ENCODE measurements at regions of chr20 and their contacts with region 1.

Region 1: DNA sequence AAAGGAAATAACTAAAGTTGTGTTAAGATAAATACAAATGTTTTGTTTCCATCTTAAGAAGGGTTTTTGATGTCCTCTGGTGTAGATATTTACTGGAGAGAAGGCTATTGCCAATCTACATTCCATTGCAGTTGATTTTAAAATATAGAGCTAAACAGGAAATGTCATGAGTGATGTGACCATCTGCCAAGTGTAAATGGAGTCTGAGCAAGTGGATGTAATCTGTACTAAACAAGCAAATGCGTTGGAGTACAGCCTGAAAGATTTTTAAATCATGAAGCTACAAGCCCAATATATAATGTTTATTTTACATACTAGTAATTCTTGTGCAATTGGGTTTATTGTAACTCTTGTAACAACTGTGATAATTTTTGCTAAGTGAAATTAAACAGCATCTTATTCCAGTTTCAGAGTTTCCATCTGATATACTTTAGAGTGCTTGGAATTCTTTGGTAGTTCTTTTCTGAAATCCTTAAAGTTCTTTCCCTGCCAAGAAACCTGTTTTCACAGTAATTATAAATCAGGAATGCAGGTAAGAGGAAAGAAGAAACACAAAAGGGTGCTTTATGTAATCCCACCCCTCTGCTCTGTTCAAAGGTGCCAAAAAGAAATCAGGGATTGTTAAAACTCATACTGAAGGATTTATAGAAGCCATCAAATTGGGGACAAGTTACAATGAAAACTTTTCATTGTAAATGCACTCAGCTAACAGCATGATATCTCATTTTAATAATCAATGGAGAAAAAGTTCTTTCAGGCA is 47.2 kb upstream of the FLRT3 start:
- DNase-seq: no peak
- ATAC-seq: no peak
- H3K4me3 ChIP-seq: no peak overlapping the region
- H3K4me3 Mint-ChIP-seq: no peak overlapping the region
- H3K27ac ChIP-seq: no peak overlapping the region
- H3K27ac Mint-ChIP-seq: no peak overlapping the region
- H3K4me1 ChIP-seq: no peaks in the 10 kb centered on the region
- H3K4me1 Mint-ChIP-seq: no peaks in the 10 kb centered on the region
- H3K27me3 ChIP-seq: no peaks in the 10 kb centered on the region
- H3K27me3 Mint-ChIP-seq: no peaks in the 10 kb centered on the region

Region 2: GRCh38 chr20:14113416-14113815 is 271.2 kb before region 1 on chr20:
- CTCF ChIA-PET with region 1: no interaction called
- POLR2A ChIA-PET with region 1: interaction called in 1 of 2 experiments, 13 read pairs
- DNase-seq: no peak
- ATAC-seq: no peak
- H3K4me3 ChIP-seq: no peak overlapping the region
- H3K4me3 Mint-ChIP-seq: no peak overlapping the region
- H3K27ac ChIP-seq: no peak overlapping the region
- H3K27ac Mint-ChIP-seq: no peak overlapping the region
- H3K4me1 ChIP-seq: no peaks in the 10 kb centered on the region
- H3K4me1 Mint-ChIP-seq: no peaks in the 10 kb centered on the region
- H3K27me3 ChIP-seq: no peaks in the 10 kb centered on the region
- H3K27me3 Mint-ChIP-seq: peaks cover 0 to 6% of the 10 kb centered on the region in 2 donors

Region 3: DNA sequence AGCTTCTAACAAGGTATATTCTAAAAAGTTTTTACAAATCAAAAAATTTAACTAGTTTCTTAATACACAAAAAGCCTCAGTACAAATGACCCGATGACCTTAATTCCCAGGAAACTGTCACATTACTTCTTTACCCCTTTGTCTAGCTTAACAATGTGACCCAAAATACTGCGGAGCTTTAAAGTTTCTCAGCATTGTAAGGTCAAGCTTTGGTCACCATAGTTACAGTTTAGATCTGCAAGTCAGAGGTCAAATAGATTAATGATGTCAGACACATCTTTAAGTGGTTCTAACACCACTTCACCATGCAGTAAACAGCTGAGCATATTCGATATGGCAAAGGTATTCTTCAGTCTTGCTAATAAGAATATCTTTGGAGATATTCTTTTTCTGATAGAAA is 10.4 kb before region 1 on chr20:
- CTCF ChIA-PET with region 1: no interaction called
- POLR2A ChIA-PET with region 1: no interaction called
- DNase-seq: no peak
- ATAC-seq: no peak
- H3K4me3 ChIP-seq: no peak overlapping the region
- H3K4me3 Mint-ChIP-seq: no peak overlapping the region
- H3K27ac ChIP-seq: no peak overlapping the region
- H3K27ac Mint-ChIP-seq: no peak overlapping the region
- H3K4me1 ChIP-seq: no peaks in the 10 kb centered on the region
- H3K4me1 Mint-ChIP-seq: no peaks in the 10 kb centered on the region
- H3K27me3 ChIP-seq: no peaks in the 10 kb centered on the region
- H3K27me3 Mint-ChIP-seq: no peaks in the 10 kb centered on the region

Measured in T-cell (primary cell).